AG04450 (cell line): ENCODE measurements at regions of chr19 and their contacts with region 1.

Region 1: GRCh38 chr19:29603308-29603707 is 2.8 kb upstream of the POP4 start:
- DNase-seq: no peak
- H3K4me3 ChIP-seq: no peak overlapping the region
- H3K27ac ChIP-seq: no peak overlapping the region
- H3K27me3 ChIP-seq: peaks cover 2% of the 10 kb centered on the region
- CTCF ChIP-seq: no peak

Region 2: GRCh38 chr19:28061111-28061510 is 1542.2 kb before region 1 on chr19:
- CTCF ChIA-PET with region 1: interaction called, 10 read pairs
- POLR2A ChIA-PET with region 1: no interaction called
- DNase-seq: no peak
- H3K4me3 ChIP-seq: no peak overlapping the region
- H3K27ac ChIP-seq: no peak overlapping the region
- H3K27me3 ChIP-seq: no peaks in the 10 kb centered on the region
- CTCF ChIP-seq: no peak

Region 3: DNA sequence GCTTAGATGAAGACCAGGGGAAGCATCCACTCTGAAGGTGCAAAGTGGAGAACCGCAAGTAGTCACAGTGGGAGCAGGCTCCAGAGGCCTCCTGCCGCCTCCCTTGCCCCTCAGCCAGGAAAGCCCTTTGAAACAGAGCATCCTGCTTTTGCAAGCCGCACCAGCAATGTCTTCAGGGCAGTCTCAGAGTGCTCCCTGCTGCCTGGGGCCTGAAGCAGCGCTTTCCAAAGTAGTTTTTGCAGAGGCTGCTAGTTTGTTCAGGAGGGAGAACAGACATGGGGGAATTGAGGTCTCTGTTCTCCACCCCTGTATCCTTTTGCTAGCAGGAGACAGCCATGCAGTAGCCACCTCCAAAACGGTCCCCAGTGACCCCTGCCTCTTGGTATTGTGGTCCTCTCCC is 13.0 kb before region 1 on chr19:
- CTCF ChIA-PET with region 1: no interaction called
- POLR2A ChIA-PET with region 1: no interaction called
- DNase-seq: no peak
- H3K4me3 ChIP-seq: no peak overlapping the region
- H3K27ac ChIP-seq: no peak overlapping the region
- H3K27me3 ChIP-seq: peaks cover 2% of the 10 kb centered on the region
- CTCF ChIP-seq: no peak